Tibial artery (tissue), 4 donors: ENCODE measurements at regions of chrX and their contacts with region 1.

Region 1: GRCh38 chrX:19904778-19905367 is 17.5 kb upstream of the SH3KBP1 start:
- DNase-seq: no peak
- H3K4me3 ChIP-seq: no peak overlapping the region
- H3K27ac ChIP-seq: no peak overlapping the region
- H3K4me1 ChIP-seq: no peaks in the 10 kb centered on the region
- H3K27me3 ChIP-seq: no peaks in the 10 kb centered on the region
- CTCF ChIP-seq: peak; percentile 48 to 58

Region 2: GRCh38 chrX:19987856-19988255 is 83.0 kb after region 1 on chrX:
- intact Hi-C with region 1: loop called (anchors 10 kb)
- DNase-seq: no peak
- H3K4me3 ChIP-seq: no peak overlapping the region
- H3K27ac ChIP-seq: no peak overlapping the region
- H3K4me1 ChIP-seq: no peaks in the 10 kb centered on the region
- H3K27me3 ChIP-seq: no peaks in the 10 kb centered on the region
- CTCF ChIP-seq: no peak

Region 3: GRCh38 chrX:20128670-20129069 is 223.8 kb after region 1 on chrX:
- intact Hi-C with region 1: no loop called
- DNase-seq: no peak
- H3K4me3 ChIP-seq: no peak overlapping the region
- H3K27ac ChIP-seq: no peak overlapping the region
- H3K4me1 ChIP-seq: no peaks in the 10 kb centered on the region
- H3K27me3 ChIP-seq: no peaks in the 10 kb centered on the region
- CTCF ChIP-seq: no peak